IMR-90 (cell line): ENCODE measurements at regions of chr13 and their contacts with region 1.

Region 1: DNA sequence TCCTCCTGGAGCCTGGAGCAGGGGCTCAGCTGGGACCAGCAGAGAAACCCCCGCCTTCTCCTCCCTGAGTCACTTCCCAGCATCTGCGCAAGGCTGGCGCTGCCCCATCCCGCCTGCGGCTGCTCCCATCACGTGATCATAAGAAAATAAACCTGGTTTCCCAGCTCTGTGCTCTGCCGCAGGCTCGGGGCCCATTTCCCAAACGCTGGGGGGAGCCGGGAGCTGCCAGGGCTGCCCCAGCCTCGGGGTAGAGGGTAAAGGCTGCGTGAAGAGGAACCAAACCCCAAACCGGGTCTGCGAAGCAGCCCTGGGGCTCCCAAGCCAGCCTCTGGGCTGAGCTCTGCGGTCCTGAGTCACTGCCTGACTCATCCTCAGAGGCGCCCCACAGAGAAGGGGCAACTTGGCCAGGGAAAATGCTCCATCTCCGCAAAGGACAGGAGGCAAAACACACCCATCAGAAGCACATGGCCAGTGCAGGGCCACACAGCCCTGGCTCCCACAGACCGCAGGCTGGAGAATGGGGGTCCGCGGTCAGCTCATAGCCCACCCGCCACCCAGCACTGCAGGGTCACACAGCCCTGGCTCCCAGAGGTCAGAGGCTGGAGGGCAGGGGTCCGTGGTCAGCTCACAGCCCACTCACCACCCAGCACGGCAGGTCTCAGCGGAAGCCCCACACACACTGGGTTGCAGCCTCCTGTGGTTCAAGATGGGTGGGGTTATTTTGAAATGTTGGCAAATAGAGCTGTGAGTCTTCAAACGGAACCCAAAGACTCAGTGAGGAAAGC is 67.1 kb downstream of the RASA3 start:
- DNase-seq: peak; percentile 98
- ATAC-seq: peak; percentile 84
- H3K4me3 ChIP-seq: peak overlapping the region; percentile 13; the same call in 1 of the 2 replicates
- H3K27ac ChIP-seq: peak overlapping the region; percentile 98
- H3K4me1 ChIP-seq: peaks cover 52% of the 10 kb centered on the region
- H3K27me3 ChIP-seq: no peaks in the 10 kb centered on the region
- CTCF ChIP-seq: peak; percentile 12; the same call in 1 of the 2 replicates
- POLR2A ChIP-seq: peak; percentile 55; the same call in 1 of the 2 replicates
- RAD21 ChIP-seq: peak; percentile 19; the same call in 1 of the 2 replicates

Region 2: GRCh38 chr13:113078876-113079620 is 986.3 kb before region 1 on chr13:
- CTCF ChIA-PET with region 1: no interaction called
- POLR2A ChIA-PET with region 1: no interaction called
- dilution Hi-C with region 1: no loop called
- in situ Hi-C with region 1: no loop called
- intact Hi-C with region 1: no loop called
- DNase-seq: no peak
- ATAC-seq: no peak
- H3K4me3 ChIP-seq: no peak overlapping the region
- H3K27ac ChIP-seq: no peak overlapping the region
- H3K4me1 ChIP-seq: no peaks in the 10 kb centered on the region; the same call in 1 of the 2 replicates
- H3K27me3 ChIP-seq: peaks cover 27% of the 10 kb centered on the region
- CTCF ChIP-seq: no peak
- POLR2A ChIP-seq: no peak
- RAD21 ChIP-seq: no peak

Region 3: DNA sequence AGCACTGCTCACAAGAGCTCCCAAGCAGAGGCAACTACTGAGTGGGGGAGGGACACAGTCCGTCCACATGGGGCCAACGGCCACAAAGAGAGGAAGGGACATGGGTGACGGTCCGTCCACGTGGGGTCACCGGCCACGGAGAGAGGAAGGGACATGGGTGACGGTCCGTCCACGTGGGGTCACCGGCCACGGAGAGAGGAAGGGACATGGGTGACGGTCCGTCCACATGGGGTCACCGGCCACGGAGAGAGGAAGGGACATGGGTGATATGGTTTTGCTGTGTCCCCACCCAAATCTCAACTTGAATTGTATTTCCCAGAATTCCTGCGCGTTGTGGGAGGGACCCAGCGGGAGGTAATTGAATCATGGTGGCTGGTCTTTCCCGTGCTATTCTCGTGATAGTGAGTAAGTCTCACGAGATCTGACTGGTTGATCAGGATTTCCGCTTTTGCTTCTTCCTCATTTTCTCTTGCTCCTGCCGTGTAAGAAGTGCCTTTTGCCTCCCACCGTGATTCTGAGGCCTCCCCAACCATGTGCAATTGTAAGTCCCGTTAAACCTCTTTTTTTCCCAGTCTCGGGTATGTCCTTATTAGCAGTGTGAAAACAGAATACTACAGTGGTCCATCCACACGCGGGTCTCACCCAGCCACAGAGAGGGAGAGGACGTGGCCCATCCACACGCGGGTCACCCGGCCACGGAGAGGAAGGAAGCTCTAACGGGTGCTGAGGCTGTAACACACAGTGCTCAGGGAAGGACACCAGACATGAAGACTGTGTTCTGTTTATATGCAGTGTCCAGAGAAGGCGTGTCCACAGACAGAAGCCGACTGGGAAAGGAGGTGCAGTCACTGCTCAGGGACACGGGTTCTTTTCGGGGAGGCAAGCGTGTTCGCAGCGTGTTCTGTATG is 249.9 kb before region 1 on chr13:
- CTCF ChIA-PET with region 1: no interaction called
- POLR2A ChIA-PET with region 1: no interaction called
- dilution Hi-C with region 1: no loop called
- in situ Hi-C with region 1: no loop called
- intact Hi-C with region 1: no loop called
- DNase-seq: no peak
- ATAC-seq: no peak
- H3K4me3 ChIP-seq: no peak overlapping the region
- H3K27ac ChIP-seq: no peak overlapping the region
- H3K4me1 ChIP-seq: peaks cover 20% of the 10 kb centered on the region
- H3K27me3 ChIP-seq: no peaks in the 10 kb centered on the region
- CTCF ChIP-seq: no peak
- POLR2A ChIP-seq: no peak
- RAD21 ChIP-seq: no peak

Region 4: DNA sequence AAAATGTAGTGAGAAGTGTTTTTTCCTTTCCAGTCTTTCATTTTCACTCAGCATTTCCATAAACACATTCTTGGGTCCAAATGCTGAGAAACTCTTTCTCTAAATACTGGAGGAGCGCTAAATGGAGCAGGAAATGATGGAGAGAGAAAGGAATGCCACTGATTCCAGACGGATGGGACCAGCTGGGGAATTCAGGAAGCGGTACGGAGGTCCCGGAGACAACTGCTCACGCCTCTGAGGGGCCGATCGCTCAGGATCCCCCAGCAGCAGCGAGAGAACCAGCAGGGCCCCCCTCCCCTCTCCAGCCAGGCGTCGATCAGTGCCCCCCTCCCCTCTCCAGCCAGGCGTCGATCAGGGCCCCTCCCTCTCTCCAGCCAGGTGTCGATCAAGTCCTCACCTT is 53.9 kb after region 1 on chr13:
- CTCF ChIA-PET with region 1: no interaction called
- POLR2A ChIA-PET with region 1: no interaction called
- dilution Hi-C with region 1: no loop called
- in situ Hi-C with region 1: no loop called
- intact Hi-C with region 1: loop called (anchors 1 kb)
- DNase-seq: peak; percentile 95
- ATAC-seq: peak; percentile 75
- H3K4me3 ChIP-seq: no peak overlapping the region; the same call in 1 of the 2 replicates
- H3K27ac ChIP-seq: peak overlapping the region; percentile 99
- H3K4me1 ChIP-seq: peaks cover 37% of the 10 kb centered on the region
- H3K27me3 ChIP-seq: no peaks in the 10 kb centered on the region
- CTCF ChIP-seq: no peak
- POLR2A ChIP-seq: no peak; the same call in 1 of the 2 replicates
- RAD21 ChIP-seq: peak; percentile 19